ENCODE measurements at regions of chr5 and their contacts with region 1.

Region 1: DNA sequence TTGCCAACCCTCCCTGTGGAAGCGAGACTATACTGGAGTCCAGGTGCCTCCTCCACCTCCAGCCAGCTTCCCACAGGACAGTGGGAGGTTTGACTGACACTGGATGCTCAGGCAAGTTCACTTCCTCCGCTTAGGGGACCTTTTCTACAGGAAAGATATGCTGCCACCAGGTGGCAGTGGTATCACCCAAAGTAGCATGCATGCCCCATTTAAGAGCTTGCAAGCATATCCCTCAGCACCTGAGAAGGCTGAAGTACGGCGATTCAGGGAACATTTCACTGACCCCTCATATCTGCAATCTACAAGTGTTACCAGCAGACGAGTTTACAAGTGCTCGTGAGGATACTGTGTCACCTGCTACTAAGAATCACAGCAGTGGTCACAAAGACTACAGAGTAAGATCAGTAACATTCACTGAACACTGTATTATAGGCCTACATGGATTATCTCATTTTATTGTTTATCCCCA is 75.5 kb downstream of the KLHL3 start:
- DNase-seq: peak; percentile 81
- ATAC-seq: peak; percentile 93
- H3K4me3 ChIP-seq: no peak overlapping the region
- H3K27ac ChIP-seq: no peak overlapping the region
- H3K4me1 ChIP-seq: no peaks in the 10 kb centered on the region
- H3K27me3 ChIP-seq: no peaks in the 10 kb centered on the region
- CTCF ChIP-seq: peak; percentile 75
- POLR2A ChIP-seq: no peak
- RAD21 ChIP-seq: peak; percentile 80

Region 2: DNA sequence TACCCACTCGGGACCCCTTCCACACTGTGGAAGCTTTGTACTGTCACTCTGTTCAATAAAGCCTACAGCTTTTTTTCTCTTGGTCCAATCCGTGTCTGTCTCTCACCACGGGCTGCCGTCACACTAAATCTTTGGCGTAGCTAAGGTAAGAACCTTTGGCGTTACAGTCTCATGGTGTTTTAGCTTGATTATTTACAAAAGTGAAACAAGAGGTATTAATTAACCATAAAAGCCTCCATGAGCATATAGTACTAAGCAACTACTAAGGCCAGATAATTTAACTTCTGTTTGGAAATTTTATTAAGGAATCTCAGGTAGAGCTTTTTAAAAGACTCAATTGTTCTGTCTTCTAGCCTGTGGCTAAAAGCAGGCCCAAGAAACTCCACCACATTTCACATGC is 924.4 kb before region 1 on chr5:
- CTCF ChIA-PET with region 1: no interaction called
- POLR2A ChIA-PET with region 1: interaction called, 22 read pairs
- dilution Hi-C with region 1: no loop called
- in situ Hi-C with region 1: no loop called
- intact Hi-C with region 1: no loop called
- DNase-seq: no peak
- ATAC-seq: no peak
- H3K4me3 ChIP-seq: no peak overlapping the region
- H3K27ac ChIP-seq: no peak overlapping the region
- H3K4me1 ChIP-seq: no peaks in the 10 kb centered on the region
- H3K27me3 ChIP-seq: no peaks in the 10 kb centered on the region
- CTCF ChIP-seq: no peak
- POLR2A ChIP-seq: no peak
- RAD21 ChIP-seq: no peak

Region 3: GRCh38 chr5:137684761-137685160 is 24.4 kb after region 1 on chr5:
- CTCF ChIA-PET with region 1: no interaction called
- POLR2A ChIA-PET with region 1: no interaction called
- dilution Hi-C with region 1: no loop called
- in situ Hi-C with region 1: no loop called
- intact Hi-C with region 1: no loop called
- DNase-seq: no peak
- ATAC-seq: no peak
- H3K4me3 ChIP-seq: no peak overlapping the region
- H3K27ac ChIP-seq: no peak overlapping the region
- H3K4me1 ChIP-seq: no peaks in the 10 kb centered on the region
- H3K27me3 ChIP-seq: no peaks in the 10 kb centered on the region
- CTCF ChIP-seq: no peak
- POLR2A ChIP-seq: no peak
- RAD21 ChIP-seq: no peak

Region 4: GRCh38 chr5:137735555-137736284 is 75.3 kb after region 1 on chr5 and contains the start of gene KLHL3:
- CTCF ChIA-PET with region 1: interaction called, 25 read pairs
- POLR2A ChIA-PET with region 1: no interaction called
- dilution Hi-C with region 1: no loop called
- in situ Hi-C with region 1: loop called (anchors 5 kb)
- intact Hi-C with region 1: no loop called
- DNase-seq: peak; percentile 66
- ATAC-seq: peak; percentile 78
- H3K4me3 ChIP-seq: peak within 1 kb of the TSS; percentile 33
- H3K27ac ChIP-seq: peak within 1 kb of the TSS; percentile 6; the same call in 1 of the 2 replicates
- H3K4me1 ChIP-seq: no peaks in the 10 kb centered on the region; the same call in none of the 2 replicates
- H3K27me3 ChIP-seq: no peaks in the 10 kb centered on the region; the same call in 1 of the 2 replicates
- CTCF ChIP-seq: peak; percentile 36; the same call in 1 of the 2 replicates
- POLR2A ChIP-seq: no peak
- RAD21 ChIP-seq: peak; percentile 56
- total RNA-seq, gene KLHL3: 4.1 and 4.7 TPM in 2 replicates

Measured in IMR-90 (cell line).